Heart right ventricle (tissue), 16 donors: ENCODE measurements at regions of chr5 and their contacts with region 1.

Region 1: GRCh38 chr5:140302786-140303639 is at the start of gene PFDN1:
- DNase-seq: peak; percentile 92 to 96
- ATAC-seq: peak; percentile 95 to 99 (median 99)
- H3K4me3 ChIP-seq: peak within 1 kb of the TSS; percentile 70 to 88 (median 80)
- H3K27ac ChIP-seq: peak within 1 kb of the TSS; percentile 74 to 93 (median 86)
- H3K4me1 ChIP-seq: peaks cover 5 to 41% (median 36%) of the 10 kb centered on the region in 9 donors
- H3K27me3 ChIP-seq: no peaks in the 10 kb centered on the region
- CTCF ChIP-seq: no peak
- total RNA-seq, gene PFDN1: 56.8 to 94.0 (median 77.0) TPM

Region 2: GRCh38 chr5:140189977-140190871 is 112.8 kb before region 1 on chr5:
- intact Hi-C with region 1: no loop called
- DNase-seq: no peak
- ATAC-seq: peak; percentile 68 to 89 (median 79)
- H3K4me3 ChIP-seq: peak overlapping the region in 2 of 10 donors; percentile 4 to 18
- H3K27ac ChIP-seq: peak overlapping the region in 9 of 10 donors; percentile 25 to 81 (median 62)
- H3K4me1 ChIP-seq: peaks cover 4 to 75% (median 45%) of the 10 kb centered on the region in 9 donors
- H3K27me3 ChIP-seq: no peaks in the 10 kb centered on the region
- CTCF ChIP-seq: no peak

Region 3: DNA sequence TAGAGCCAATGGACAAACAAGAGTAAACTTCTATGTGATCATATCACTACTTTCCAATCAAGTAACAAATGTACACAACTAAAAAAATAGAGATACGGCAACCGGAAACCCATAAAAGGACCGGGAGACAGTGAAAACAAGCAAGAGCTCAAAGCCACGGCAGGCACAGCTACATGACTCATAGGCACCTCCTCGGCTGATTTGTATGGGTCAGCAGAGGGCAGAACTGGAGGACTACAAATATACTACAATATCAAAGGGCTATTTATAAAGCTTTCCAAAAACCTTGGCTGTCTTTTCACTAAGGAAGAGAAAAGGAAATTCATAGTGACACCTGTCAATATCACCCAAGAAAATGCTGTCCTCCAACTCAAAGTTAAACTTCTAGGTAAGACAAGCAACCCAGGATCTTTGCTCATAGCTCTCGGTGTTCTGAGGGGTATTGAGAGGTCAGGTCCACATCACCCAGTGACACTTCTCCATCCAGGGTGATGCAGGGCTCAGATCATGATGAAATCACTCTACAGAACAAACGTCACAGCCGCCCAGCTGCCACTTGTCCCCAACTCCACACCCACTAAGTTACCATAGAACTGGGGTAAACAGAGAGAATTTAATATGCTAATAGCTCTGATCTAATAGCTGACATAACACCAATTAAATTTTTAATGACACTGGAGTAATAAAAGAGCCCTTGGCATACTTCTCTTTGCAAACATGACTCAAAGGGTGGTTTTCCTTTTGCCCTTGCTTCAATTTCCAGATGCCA is 41.4 kb before region 1 on chr5:
- intact Hi-C with region 1: loop called in 4 of 10 experiments (anchors 5 kb)
- DNase-seq: peak; percentile 52 to 81
- ATAC-seq: peak; percentile 90 to 97 (median 96)
- H3K4me3 ChIP-seq: peak overlapping the region in 4 of 10 donors; percentile 5 to 13 (median 8)
- H3K27ac ChIP-seq: peak overlapping the region; percentile 55 to 89 (median 75)
- H3K4me1 ChIP-seq: peaks cover 12 to 76% (median 46%) of the 10 kb centered on the region in 9 donors
- H3K27me3 ChIP-seq: no peaks in the 10 kb centered on the region
- CTCF ChIP-seq: peak in 6 of 9 donors; percentile 10 to 53 (median 36)

Region 4: DNA sequence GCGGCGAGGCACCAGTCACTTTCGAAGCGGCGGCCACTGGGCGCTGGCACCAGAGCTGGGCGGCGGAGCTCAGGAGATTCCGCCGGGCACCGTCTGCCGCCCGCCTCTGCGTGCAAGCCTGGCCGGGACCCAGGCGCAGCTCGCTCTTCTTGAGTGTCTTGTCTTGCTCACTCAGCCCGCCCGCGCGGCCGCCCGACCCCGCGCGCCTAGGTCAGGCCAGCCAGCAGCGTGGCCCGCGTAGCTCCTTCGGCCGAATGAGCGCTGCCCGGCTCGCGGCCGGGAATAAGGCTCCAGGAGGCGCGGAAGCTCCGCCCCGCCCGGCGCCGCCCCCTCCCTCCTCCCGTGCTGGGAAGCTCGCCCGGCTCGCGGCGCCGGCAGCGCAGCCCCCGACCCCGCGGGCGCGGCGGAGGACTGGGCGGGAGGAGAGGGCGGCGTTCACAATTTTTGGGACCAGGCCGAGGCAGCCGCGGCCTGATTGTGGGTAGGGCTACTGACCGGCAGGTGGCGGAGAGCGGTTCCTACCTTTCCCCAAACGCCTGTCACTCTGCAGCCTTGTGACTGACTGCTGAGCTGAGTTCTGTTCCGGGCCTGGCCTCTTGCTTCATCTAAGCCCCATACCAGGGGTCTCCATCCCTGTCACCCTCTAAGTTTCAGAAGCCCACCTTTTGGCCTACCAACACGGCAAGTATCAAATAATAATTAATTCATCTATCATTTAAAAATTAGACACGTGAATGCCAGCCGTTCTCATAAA is 43.5 kb after region 1 on chr5 and contains the start of gene HBEGF:
- intact Hi-C with region 1: loop called in 8 of 10 experiments (anchors 2 to 10 kb)
- DNase-seq: peak; percentile 84 to 88
- ATAC-seq: peak; percentile 70 to 91 (median 84)
- H3K4me3 ChIP-seq: peak within 1 kb of the TSS; percentile 78 to 97 (median 88)
- H3K27ac ChIP-seq: peak within 1 kb of the TSS; percentile 74 to 97 (median 95)
- H3K4me1 ChIP-seq: peaks cover 19 to 68% (median 60%) of the 10 kb centered on the region in 9 donors
- H3K27me3 ChIP-seq: no peaks in the 10 kb centered on the region
- CTCF ChIP-seq: peak; percentile 17 to 68 (median 47)
- total RNA-seq, gene HBEGF: 18.5 to 121 (median 33.3) TPM